BJ (cell line): ENCODE measurements at regions of chr9 and their contacts with region 1.

Region 1: GRCh38 chr9:129696938-129697650 is 31.6 kb downstream of the PRRX2 start:
- DNase-seq: no peak
- H3K4me3 ChIP-seq: peak overlapping the region; percentile 38
- H3K27me3 ChIP-seq: no peaks in the 10 kb centered on the region
- CTCF ChIP-seq: no peak

Region 2: GRCh38 chr9:129712634-129713401 is 15.7 kb after region 1 on chr9:
- CTCF ChIA-PET with region 1: interaction called, 12 read pairs
- POLR2A ChIA-PET with region 1: interaction called, 20 read pairs
- DNase-seq: peak; percentile 84
- H3K4me3 ChIP-seq: no peak overlapping the region
- H3K27me3 ChIP-seq: no peaks in the 10 kb centered on the region
- CTCF ChIP-seq: 0 out of 2 replicates have a peak, but pooled peaks have one; percentile 13

Region 3: GRCh38 chr9:129761901-129762364 is 64.8 kb after region 1 on chr9:
- CTCF ChIA-PET with region 1: no interaction called
- POLR2A ChIA-PET with region 1: interaction called, 11 read pairs
- DNase-seq: peak; percentile 75
- H3K4me3 ChIP-seq: no peak overlapping the region
- H3K27me3 ChIP-seq: no peaks in the 10 kb centered on the region
- CTCF ChIP-seq: no peak

Region 4: GRCh38 chr9:131203431-131204218 is 1506.5 kb after region 1 on chr9:
- CTCF ChIA-PET with region 1: no interaction called
- POLR2A ChIA-PET with region 1: no interaction called
- DNase-seq: no peak
- H3K4me3 ChIP-seq: no peak overlapping the region
- H3K27me3 ChIP-seq: no peaks in the 10 kb centered on the region
- CTCF ChIP-seq: no peak